Prostate gland (tissue), 2 donors: ENCODE measurements at regions of chr3 and their contacts with region 1.

Region 1: GRCh38 chr3:141275983-141276382 is 44.4 kb downstream of the PXYLP1 start:
- DNase-seq: no peak
- H3K4me3 ChIP-seq: no peak overlapping the region
- H3K27ac ChIP-seq: no peak overlapping the region
- H3K4me1 ChIP-seq: no peaks in the 10 kb centered on the region
- H3K27me3 ChIP-seq: no peaks in the 10 kb centered on the region
- CTCF ChIP-seq: no peak
- POLR2A ChIP-seq: no peak

Region 2: DNA sequence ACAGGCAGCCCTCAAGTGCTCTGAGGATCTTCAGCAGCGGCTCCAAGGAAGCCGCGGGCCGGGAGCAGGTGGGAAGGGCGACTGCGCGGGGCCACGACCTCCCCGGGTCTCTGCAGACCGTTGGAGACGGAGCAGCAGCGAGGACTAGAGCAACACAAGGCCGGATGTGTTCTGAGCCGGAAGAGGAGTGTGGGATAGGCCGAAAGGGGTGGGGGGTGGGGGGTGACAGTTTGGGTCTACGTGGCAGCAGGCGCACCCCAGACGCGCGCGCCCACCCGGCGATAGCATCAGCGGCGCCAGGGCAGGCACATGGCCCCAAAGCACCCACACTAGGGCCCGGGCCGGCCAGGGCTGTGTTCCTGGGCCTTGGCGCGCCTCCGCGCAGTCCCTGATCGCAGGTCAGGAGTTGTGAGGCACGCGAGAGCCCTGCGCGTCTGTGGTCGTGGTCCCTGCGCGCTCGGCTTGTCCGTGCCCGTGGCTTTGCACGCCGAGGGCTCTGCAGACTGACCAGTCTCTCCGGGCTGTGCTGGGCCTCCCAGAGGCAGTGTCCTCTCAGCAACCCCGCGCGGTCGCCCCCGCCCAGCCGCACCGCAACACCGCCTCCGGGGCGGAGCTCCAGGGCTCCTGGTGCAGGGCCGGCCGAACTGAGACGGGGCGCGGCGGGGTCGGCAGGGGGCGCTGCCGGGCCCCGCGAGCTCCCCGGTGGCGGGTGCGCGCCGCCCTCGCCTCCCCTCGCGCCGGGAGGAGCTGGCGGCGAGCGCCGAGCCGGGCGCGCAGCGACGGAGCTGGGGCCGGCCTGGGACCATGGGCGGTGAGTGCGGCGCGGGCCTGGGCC is 44.7 kb before region 1 on chr3 and contains the start of gene PXYLP1:
- intact Hi-C with region 1: loop called (anchors 2 kb)
- DNase-seq: peak; percentile 89
- H3K4me3 ChIP-seq: peak within 1 kb of the TSS; percentile 59 to 72
- H3K27ac ChIP-seq: peak within 1 kb of the TSS; percentile 81 to 87
- H3K4me1 ChIP-seq: no peaks in the 10 kb centered on the region
- H3K27me3 ChIP-seq: no peaks in the 10 kb centered on the region
- CTCF ChIP-seq: peak; percentile 58 to 95 (median 81)
- POLR2A ChIP-seq: peak; percentile 75
- total RNA-seq, gene PXYLP1: 12.0 to 15.3 TPM